ENCODE measurements at regions of chr6 and their contacts with region 1.

Region 1: DNA sequence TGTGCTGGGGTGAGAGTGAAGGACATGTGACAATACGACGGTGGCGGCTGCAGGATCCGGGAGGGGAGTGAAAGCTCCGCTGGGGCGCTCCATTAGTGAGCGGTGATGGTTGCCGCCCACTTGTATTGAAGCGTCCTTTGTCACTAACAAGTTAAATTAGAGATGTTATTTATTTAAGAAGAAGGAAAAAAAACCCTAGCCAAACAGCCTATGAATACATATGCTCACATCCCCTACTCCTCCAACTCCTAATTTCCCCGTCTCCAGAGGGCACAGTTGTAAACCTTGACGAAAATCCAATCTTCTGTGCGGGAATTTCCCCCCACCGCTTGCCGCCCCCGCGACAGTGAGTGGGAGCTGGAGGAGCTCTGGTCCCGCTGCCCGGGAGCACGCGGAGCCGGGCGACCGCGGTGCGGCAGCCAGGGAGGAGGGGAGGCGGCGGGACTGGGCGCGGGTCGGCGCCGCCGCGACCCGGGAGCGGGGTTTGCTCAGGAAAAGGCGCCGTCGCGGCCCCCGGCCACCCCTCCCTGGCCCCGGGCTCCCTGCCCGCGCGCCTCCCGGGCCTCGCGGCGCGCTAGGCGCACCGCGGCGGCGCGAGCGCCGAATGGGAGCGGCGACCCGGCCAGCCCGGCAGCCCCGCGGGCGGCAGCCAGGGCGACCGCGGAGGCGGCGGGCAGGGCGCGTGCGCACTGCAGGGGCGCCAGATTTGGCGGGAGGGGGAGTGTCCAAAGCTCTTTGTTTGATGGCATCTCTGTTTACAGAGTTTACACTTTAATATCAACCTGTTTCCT is at the start of gene MYB:
- DNase-seq: peak; percentile 38
- ATAC-seq: peak; percentile 87
- H3K4me3 ChIP-seq: peak within 1 kb of the TSS; percentile 72
- H3K27ac ChIP-seq: no peak within 1 kb of the TSS
- H3K4me1 ChIP-seq: peaks cover 4% of the 10 kb centered on the region; the same call in 1 of the 2 replicates
- H3K27me3 ChIP-seq: peaks cover 30% of the 10 kb centered on the region
- CTCF ChIP-seq: no peak
- POLR2A ChIP-seq: no peak
- RAD21 ChIP-seq: no peak
- total RNA-seq, gene MYB: 0.83 and 0.90 TPM in 2 replicates

Region 2: GRCh38 chr6:135204951-135205350 is 24.2 kb after region 1 on chr6:
- CTCF ChIA-PET with region 1: no interaction called
- POLR2A ChIA-PET with region 1: interaction called, 11 read pairs
- dilution Hi-C with region 1: no loop called
- in situ Hi-C with region 1: no loop called
- intact Hi-C with region 1: no loop called
- DNase-seq: no peak
- ATAC-seq: no peak
- H3K4me3 ChIP-seq: no peak overlapping the region
- H3K27ac ChIP-seq: no peak overlapping the region
- H3K4me1 ChIP-seq: no peaks in the 10 kb centered on the region
- H3K27me3 ChIP-seq: no peaks in the 10 kb centered on the region
- CTCF ChIP-seq: no peak
- POLR2A ChIP-seq: no peak
- RAD21 ChIP-seq: no peak

Region 3: DNA sequence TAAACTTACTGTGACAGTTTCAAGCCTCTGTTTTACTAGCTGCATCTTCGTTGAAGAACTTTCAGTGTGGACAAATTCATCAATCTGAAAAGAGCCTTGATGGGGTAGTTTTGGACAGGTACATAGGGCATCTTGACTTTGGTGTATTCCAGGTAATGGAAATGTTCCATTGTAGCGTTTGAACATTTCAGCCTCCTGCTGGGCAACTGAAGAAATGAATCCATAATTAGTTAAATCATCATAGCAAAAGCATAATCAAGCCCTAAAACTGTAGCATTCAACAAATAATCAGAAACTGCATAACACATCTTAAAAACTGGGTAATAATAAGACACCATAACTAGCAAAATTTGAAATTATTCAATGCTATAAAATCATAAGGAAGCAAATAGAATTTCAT is 230.6 kb after region 1 on chr6:
- CTCF ChIA-PET with region 1: no interaction called
- POLR2A ChIA-PET with region 1: no interaction called
- dilution Hi-C with region 1: no loop called
- in situ Hi-C with region 1: no loop called
- intact Hi-C with region 1: no loop called
- DNase-seq: no peak
- ATAC-seq: no peak
- H3K4me3 ChIP-seq: no peak overlapping the region
- H3K27ac ChIP-seq: no peak overlapping the region
- H3K4me1 ChIP-seq: no peaks in the 10 kb centered on the region
- H3K27me3 ChIP-seq: no peaks in the 10 kb centered on the region
- CTCF ChIP-seq: 0 out of 2 replicates have a peak, but pooled peaks have one; percentile 24
- POLR2A ChIP-seq: no peak
- RAD21 ChIP-seq: no peak

Region 4: DNA sequence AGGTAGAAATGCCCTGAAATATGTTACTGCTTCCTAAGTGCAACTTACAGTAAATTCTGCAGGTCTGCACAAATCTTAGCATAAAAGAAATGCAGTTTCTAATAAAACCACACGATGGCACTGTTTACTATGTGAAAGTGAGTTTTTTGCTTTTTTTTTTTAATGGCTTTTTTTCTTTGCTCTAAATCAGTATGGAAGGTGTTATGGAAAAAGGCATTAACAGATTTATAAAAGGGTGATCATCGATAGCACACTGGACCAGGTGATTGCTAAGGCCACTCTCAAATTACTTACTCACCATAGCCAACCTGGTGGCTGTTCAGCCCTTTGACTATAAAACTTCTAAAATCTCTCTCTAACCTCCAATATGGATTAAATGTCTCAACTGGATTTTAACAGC is 271.0 kb after region 1 on chr6:
- CTCF ChIA-PET with region 1: no interaction called
- POLR2A ChIA-PET with region 1: no interaction called
- dilution Hi-C with region 1: no loop called
- in situ Hi-C with region 1: no loop called
- intact Hi-C with region 1: no loop called
- DNase-seq: peak; percentile 43
- ATAC-seq: peak; percentile 29; the same call in 1 of the 2 replicates
- H3K4me3 ChIP-seq: no peak overlapping the region
- H3K27ac ChIP-seq: no peak overlapping the region
- H3K4me1 ChIP-seq: no peaks in the 10 kb centered on the region
- H3K27me3 ChIP-seq: no peaks in the 10 kb centered on the region
- CTCF ChIP-seq: peak; percentile 68
- POLR2A ChIP-seq: no peak
- RAD21 ChIP-seq: peak; percentile 72

Measured in IMR-90 (cell line).